ENCODE measurements at regions of chr2 and their contacts with region 1.

Region 1: GRCh38 chr2:98649135-98649991 is 41.0 kb downstream of the UNC50 start:
- DNase-seq: peak; percentile 83
- H3K4me3 ChIP-seq: no peak overlapping the region
- H3K27ac ChIP-seq: no peak overlapping the region
- H3K4me1 ChIP-seq: no peaks in the 10 kb centered on the region
- H3K27me3 ChIP-seq: no peaks in the 10 kb centered on the region
- CTCF ChIP-seq: peak; percentile 97 to 99 (median 98)
- POLR2A ChIP-seq: no peak

Region 2: GRCh38 chr2:98835831-98836385 is 186.5 kb after region 1 on chr2:
- intact Hi-C with region 1: loop called (anchors 1 kb)
- DNase-seq: no peak
- H3K4me3 ChIP-seq: no peak overlapping the region
- H3K27ac ChIP-seq: no peak overlapping the region
- H3K4me1 ChIP-seq: no peaks in the 10 kb centered on the region
- H3K27me3 ChIP-seq: no peaks in the 10 kb centered on the region
- CTCF ChIP-seq: no peak
- POLR2A ChIP-seq: no peak

Region 3: GRCh38 chr2:98909317-98910211 is 260.2 kb after region 1 on chr2:
- intact Hi-C with region 1: no loop called
- DNase-seq: peak; percentile 79
- H3K4me3 ChIP-seq: no peak overlapping the region
- H3K27ac ChIP-seq: peak overlapping the region in 1 of 2 donors; percentile 30
- H3K4me1 ChIP-seq: no peaks in the 10 kb centered on the region
- H3K27me3 ChIP-seq: no peaks in the 10 kb centered on the region
- CTCF ChIP-seq: no peak
- POLR2A ChIP-seq: no peak